Gastrocnemius medialis (tissue), 4 donors: ENCODE measurements at regions of chr22 and their contacts with region 1.

Region 1: DNA sequence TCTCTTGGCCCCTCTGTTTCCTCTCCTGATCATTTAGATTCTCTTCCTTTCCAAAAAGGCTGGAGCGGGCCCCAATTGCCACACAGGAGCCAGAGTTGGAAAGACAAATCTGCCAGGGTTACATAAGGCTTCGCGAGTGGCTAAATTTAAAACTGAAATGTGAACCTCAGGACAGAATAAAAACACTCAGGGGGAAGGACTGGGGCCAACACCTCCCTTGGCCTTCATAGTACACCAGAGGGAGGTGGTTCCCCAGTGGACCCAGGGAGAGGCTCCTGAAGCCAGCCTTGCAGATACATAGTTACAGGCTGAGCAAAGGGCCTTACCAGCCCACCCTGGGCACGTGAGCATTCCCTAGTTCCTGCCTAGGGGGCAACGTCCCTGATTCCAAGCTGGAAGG is 150.1 kb downstream of the MN1 start:
- DNase-seq: peak; percentile 83 to 95
- ATAC-seq: peak; percentile 89 to 93
- H3K4me3 ChIP-seq: no peak overlapping the region
- H3K27ac ChIP-seq: peak overlapping the region; percentile 86 to 97 (median 96)
- H3K4me1 ChIP-seq: peaks cover 34 to 38% of the 10 kb centered on the region in 2 donors
- H3K27me3 ChIP-seq: no peaks in the 10 kb centered on the region
- CTCF ChIP-seq: peak in 2 of 5 experiments; percentile 22 to 39
- POLR2A ChIP-seq: peak; percentile 39 to 41

Region 2: GRCh38 chr22:27686534-27686933 is 35.0 kb after region 1 on chr22:
- in situ Hi-C with region 1: no loop called
- intact Hi-C with region 1: loop called (anchors 1 kb)
- DNase-seq: peak; percentile 86 to 96
- ATAC-seq: peak; percentile 87 to 88
- H3K4me3 ChIP-seq: no peak overlapping the region
- H3K27ac ChIP-seq: peak overlapping the region; percentile 93 to 98 (median 96)
- H3K4me1 ChIP-seq: peaks cover 25% of the 10 kb centered on the region in 2 donors
- H3K27me3 ChIP-seq: no peaks in the 10 kb centered on the region
- CTCF ChIP-seq: no peak
- POLR2A ChIP-seq: peak; percentile 57 to 58

Region 3: DNA sequence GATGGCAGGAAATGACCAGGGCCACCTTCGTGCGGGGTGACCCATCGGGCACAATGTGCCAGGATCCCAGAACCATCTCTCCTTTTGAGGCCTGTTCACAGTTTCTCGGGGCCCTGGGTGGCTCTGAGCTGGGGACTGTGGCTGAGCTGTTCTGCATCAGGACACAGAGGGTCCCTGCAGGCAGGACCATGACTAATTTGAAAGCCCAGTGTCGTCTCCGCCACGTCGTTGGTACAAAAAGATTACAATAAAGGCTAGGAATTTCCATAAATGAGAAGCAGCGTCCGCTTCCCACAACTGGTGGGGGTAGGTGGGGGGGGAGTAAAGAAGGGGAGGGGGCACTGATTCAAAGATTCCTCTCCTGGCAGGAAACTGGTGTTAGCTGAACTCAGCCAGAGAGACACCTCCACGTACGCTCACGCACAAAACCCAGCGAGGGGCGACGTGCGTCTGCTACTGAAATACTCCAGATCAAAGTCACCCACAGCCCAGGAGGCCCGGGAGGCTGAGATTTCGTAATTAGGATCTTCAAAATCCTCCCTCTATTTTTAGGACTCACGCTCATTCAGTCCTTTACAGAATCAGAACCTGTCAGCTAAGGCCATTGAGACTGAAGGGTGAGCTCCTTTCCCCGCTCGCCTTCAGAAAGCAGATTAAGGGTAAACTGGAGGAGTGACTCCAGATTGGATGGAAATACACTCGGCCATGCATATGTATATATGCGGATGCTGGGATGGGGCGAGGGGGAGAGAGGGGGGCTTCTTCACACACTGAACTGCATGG is 139.1 kb after region 1 on chr22:
- in situ Hi-C with region 1: loop called in 2 of 4 experiments (anchors 10 to 25 kb)
- intact Hi-C with region 1: loop called (anchors 2 kb)
- DNase-seq: peak in 1 of 2 donors; percentile 76
- ATAC-seq: peak; percentile 91 to 92
- H3K4me3 ChIP-seq: peak overlapping the region in 2 of 4 donors; percentile 17 to 37
- H3K27ac ChIP-seq: peak overlapping the region; percentile 90 to 95 (median 94)
- H3K4me1 ChIP-seq: peaks cover 87 to 89% of the 10 kb centered on the region in 2 donors
- H3K27me3 ChIP-seq: no peaks in the 10 kb centered on the region
- CTCF ChIP-seq: no peak
- POLR2A ChIP-seq: peak; percentile 85 to 87